CD4-positive, alpha-beta memory T cell (primary cell): ENCODE measurements at regions of chr18 and their contacts with region 1.

Region 1: GRCh38 chr18:62584241-62585120 is 61.7 kb downstream of the ZCCHC2 start:
- DNase-seq: peak; percentile 81 to 88 (median 83)
- H3K4me3 ChIP-seq: no peak overlapping the region
- H3K4me3 Mint-ChIP-seq: peak overlapping the region; percentile 1 to 73 (median 36)
- H3K27ac ChIP-seq: no peak overlapping the region
- H3K27ac Mint-ChIP-seq: peak overlapping the region; percentile 33 to 93 (median 48)
- H3K4me1 ChIP-seq: peaks cover 27% of the 10 kb centered on the region
- H3K4me1 Mint-ChIP-seq: peaks cover 20 to 38% (median 31%) of the 10 kb centered on the region in 4 donors
- H3K27me3 ChIP-seq: no peaks in the 10 kb centered on the region
- H3K27me3 Mint-ChIP-seq: no peaks in the 10 kb centered on the region

Region 2: GRCh38 chr18:62324917-62325805 is 259.3 kb before region 1 on chr18 and contains the start of gene TNFRSF11A:
- CTCF ChIA-PET with region 1: interaction called, 5 read pairs
- POLR2A ChIA-PET with region 1: no interaction called
- intact Hi-C with region 1: loop called (anchors 2 kb)
- DNase-seq: peak; percentile 46 to 60 (median 51)
- H3K4me3 ChIP-seq: peak within 1 kb of the TSS; percentile 22 to 58
- H3K4me3 Mint-ChIP-seq: peak within 1 kb of the TSS; percentile 70 to 92 (median 86)
- H3K27ac ChIP-seq: no peak within 1 kb of the TSS
- H3K27ac Mint-ChIP-seq: peak within 1 kb of the TSS in 5 of 7 donors; percentile 20 to 91 (median 82)
- H3K4me1 ChIP-seq: peaks cover 19% of the 10 kb centered on the region
- H3K4me1 Mint-ChIP-seq: peaks cover 15 to 40% (median 26%) of the 10 kb centered on the region in 4 donors
- H3K27me3 ChIP-seq: peaks cover 35% of the 10 kb centered on the region
- H3K27me3 Mint-ChIP-seq: peaks cover 53 to 57% of the 10 kb centered on the region in 2 donors
- total RNA-seq, gene TNFRSF11A: 1.3 TPM

Region 3: GRCh38 chr18:62425465-62426195 is 158.9 kb before region 1 on chr18:
- CTCF ChIA-PET with region 1: interaction called, 23 read pairs
- POLR2A ChIA-PET with region 1: interaction called, 9 read pairs
- intact Hi-C with region 1: loop called (anchors 1 kb)
- DNase-seq: peak; percentile 50 to 63 (median 61)
- H3K4me3 ChIP-seq: no peak overlapping the region
- H3K4me3 Mint-ChIP-seq: peak overlapping the region in 1 of 8 donors; percentile 18
- H3K27ac ChIP-seq: no peak overlapping the region
- H3K27ac Mint-ChIP-seq: peak overlapping the region in 4 of 7 donors; percentile 19 to 66 (median 52)
- H3K4me1 ChIP-seq: peaks cover 8% of the 10 kb centered on the region
- H3K4me1 Mint-ChIP-seq: peaks cover 13 to 16% (median 16%) of the 10 kb centered on the region in 4 donors
- H3K27me3 ChIP-seq: no peaks in the 10 kb centered on the region
- H3K27me3 Mint-ChIP-seq: peaks cover 0 to 3% of the 10 kb centered on the region in 2 donors

Region 4: DNA sequence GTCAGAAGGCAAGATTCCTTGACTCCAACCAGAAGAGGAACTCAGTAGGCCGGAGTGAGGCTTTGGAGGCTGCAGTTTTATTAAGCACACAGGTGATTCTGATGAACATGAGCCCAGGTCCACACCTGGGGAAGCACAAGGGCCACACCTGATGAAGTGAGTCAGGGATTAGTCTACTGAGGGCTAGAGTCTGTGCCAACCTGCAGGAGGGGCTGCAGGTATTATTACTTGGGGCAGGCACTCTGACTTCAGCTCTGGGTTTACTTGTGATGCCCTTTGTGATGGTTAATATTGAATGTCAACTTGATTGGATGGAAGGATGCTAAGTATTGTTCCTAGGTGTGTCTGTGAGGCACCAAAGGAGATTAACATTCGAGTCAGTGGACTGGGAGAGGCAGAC is 136.8 kb before region 1 on chr18:
- CTCF ChIA-PET with region 1: interaction called, 3 read pairs
- POLR2A ChIA-PET with region 1: no interaction called
- intact Hi-C with region 1: loop called (anchors 1 kb)
- DNase-seq: no peak
- H3K4me3 ChIP-seq: no peak overlapping the region
- H3K4me3 Mint-ChIP-seq: no peak overlapping the region
- H3K27ac ChIP-seq: no peak overlapping the region
- H3K27ac Mint-ChIP-seq: no peak overlapping the region
- H3K4me1 ChIP-seq: no peaks in the 10 kb centered on the region
- H3K4me1 Mint-ChIP-seq: peaks cover 0 to 4% (median 3%) of the 10 kb centered on the region in 4 donors
- H3K27me3 ChIP-seq: no peaks in the 10 kb centered on the region
- H3K27me3 Mint-ChIP-seq: peaks cover 2 to 4% of the 10 kb centered on the region in 2 donors

Region 5: GRCh38 chr18:62522504-62523254 is 61.8 kb before region 1 on chr18 and contains the start of gene ZCCHC2:
- CTCF ChIA-PET with region 1: interaction called, 7 read pairs
- POLR2A ChIA-PET with region 1: interaction called, 4 read pairs
- intact Hi-C with region 1: loop called (anchors 1 kb)
- DNase-seq: peak; percentile 97 to 100 (median 98)
- H3K4me3 ChIP-seq: peak within 1 kb of the TSS; percentile 38 to 98
- H3K4me3 Mint-ChIP-seq: peak within 1 kb of the TSS; percentile 90 to 99 (median 96)
- H3K27ac ChIP-seq: peak within 1 kb of the TSS; percentile 93
- H3K27ac Mint-ChIP-seq: peak within 1 kb of the TSS; percentile 80 to 96 (median 87)
- H3K4me1 ChIP-seq: peaks cover 34% of the 10 kb centered on the region
- H3K4me1 Mint-ChIP-seq: peaks cover 21 to 45% (median 32%) of the 10 kb centered on the region in 4 donors
- H3K27me3 ChIP-seq: no peaks in the 10 kb centered on the region
- H3K27me3 Mint-ChIP-seq: no peaks in the 10 kb centered on the region
- total RNA-seq, gene ZCCHC2: 51.7 to 52.2 TPM

Region 6: GRCh38 chr18:62571648-62572047 is 12.8 kb before region 1 on chr18:
- CTCF ChIA-PET with region 1: interaction called, 15 read pairs
- POLR2A ChIA-PET with region 1: no interaction called
- intact Hi-C with region 1: no loop called
- DNase-seq: no peak
- H3K4me3 ChIP-seq: no peak overlapping the region
- H3K4me3 Mint-ChIP-seq: no peak overlapping the region
- H3K27ac ChIP-seq: no peak overlapping the region
- H3K27ac Mint-ChIP-seq: peak overlapping the region in 4 of 7 donors; percentile 30 to 59 (median 40)
- H3K4me1 ChIP-seq: no peaks in the 10 kb centered on the region
- H3K4me1 Mint-ChIP-seq: peaks cover 0 to 8% (median 3%) of the 10 kb centered on the region in 4 donors
- H3K27me3 ChIP-seq: no peaks in the 10 kb centered on the region
- H3K27me3 Mint-ChIP-seq: no peaks in the 10 kb centered on the region

Region 7: GRCh38 chr18:62982600-62983251 is 398.2 kb after region 1 on chr18:
- CTCF ChIA-PET with region 1: interaction called, 9 read pairs
- POLR2A ChIA-PET with region 1: no interaction called
- intact Hi-C with region 1: loop called (anchors 1 kb)
- DNase-seq: peak in 4 of 5 donors; percentile 36 to 51 (median 48)
- H3K4me3 ChIP-seq: no peak overlapping the region
- H3K4me3 Mint-ChIP-seq: peak overlapping the region in 5 of 8 donors; percentile 51 to 78 (median 69)
- H3K27ac ChIP-seq: no peak overlapping the region
- H3K27ac Mint-ChIP-seq: peak overlapping the region in 1 of 7 donors; percentile 18
- H3K4me1 ChIP-seq: peaks cover 5% of the 10 kb centered on the region
- H3K4me1 Mint-ChIP-seq: peaks cover 0 to 8% (median 6%) of the 10 kb centered on the region in 4 donors
- H3K27me3 ChIP-seq: no peaks in the 10 kb centered on the region
- H3K27me3 Mint-ChIP-seq: no peaks in the 10 kb centered on the region